ENCODE measurements at regions of chr10 and their contacts with region 1.

Region 1: DNA sequence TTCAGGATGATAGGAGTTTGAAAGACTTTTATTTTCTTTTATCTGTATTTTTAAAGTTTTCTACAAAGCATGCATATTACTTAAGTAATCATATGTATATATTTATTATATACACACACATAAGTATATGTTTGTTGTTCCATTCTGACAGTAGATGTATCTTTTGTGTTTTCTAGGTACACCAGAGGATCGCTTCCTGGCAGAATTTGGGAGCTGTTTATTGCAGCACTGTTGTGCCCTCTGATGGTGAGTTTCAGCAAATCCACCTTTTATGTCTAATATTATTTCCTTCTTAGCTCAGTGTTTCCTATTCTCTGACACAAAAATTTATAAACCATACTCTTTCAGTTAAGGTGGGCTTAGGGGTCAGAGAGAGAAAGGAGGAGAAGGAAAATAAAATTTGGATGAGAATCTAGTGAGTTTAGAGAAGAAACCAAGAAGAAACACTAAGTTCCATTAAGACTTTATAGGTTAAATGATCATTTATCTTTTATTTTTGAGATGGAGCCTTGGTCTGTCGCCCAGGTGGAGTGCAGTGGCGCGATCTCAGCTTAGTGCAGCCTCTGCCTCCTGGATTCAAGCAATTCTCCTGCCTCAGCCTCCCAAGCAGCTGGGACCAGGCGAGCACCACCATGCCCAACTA is 59.2 kb upstream of the OIT3 start:
- DNase-seq: no peak
- H3K4me3 ChIP-seq: no peak overlapping the region
- H3K27ac ChIP-seq: no peak overlapping the region
- H3K4me1 ChIP-seq: peaks cover 13% of the 10 kb centered on the region
- H3K27me3 ChIP-seq: no peaks in the 10 kb centered on the region
- CTCF ChIP-seq: peak; percentile 42 to 78 (median 47)
- POLR2A ChIP-seq: no peak

Region 2: GRCh38 chr10:72364239-72364777 is 470.0 kb before region 1 on chr10:
- intact Hi-C with region 1: loop called (anchors 10 kb)
- DNase-seq: peak in 1 of 2 donors; percentile 93
- H3K4me3 ChIP-seq: peak overlapping the region in 1 of 2 donors; percentile 9
- H3K27ac ChIP-seq: peak overlapping the region; percentile 26
- H3K4me1 ChIP-seq: peaks cover 11% of the 10 kb centered on the region
- H3K27me3 ChIP-seq: no peaks in the 10 kb centered on the region
- CTCF ChIP-seq: peak; percentile 91 to 95 (median 95)
- POLR2A ChIP-seq: no peak

Region 3: DNA sequence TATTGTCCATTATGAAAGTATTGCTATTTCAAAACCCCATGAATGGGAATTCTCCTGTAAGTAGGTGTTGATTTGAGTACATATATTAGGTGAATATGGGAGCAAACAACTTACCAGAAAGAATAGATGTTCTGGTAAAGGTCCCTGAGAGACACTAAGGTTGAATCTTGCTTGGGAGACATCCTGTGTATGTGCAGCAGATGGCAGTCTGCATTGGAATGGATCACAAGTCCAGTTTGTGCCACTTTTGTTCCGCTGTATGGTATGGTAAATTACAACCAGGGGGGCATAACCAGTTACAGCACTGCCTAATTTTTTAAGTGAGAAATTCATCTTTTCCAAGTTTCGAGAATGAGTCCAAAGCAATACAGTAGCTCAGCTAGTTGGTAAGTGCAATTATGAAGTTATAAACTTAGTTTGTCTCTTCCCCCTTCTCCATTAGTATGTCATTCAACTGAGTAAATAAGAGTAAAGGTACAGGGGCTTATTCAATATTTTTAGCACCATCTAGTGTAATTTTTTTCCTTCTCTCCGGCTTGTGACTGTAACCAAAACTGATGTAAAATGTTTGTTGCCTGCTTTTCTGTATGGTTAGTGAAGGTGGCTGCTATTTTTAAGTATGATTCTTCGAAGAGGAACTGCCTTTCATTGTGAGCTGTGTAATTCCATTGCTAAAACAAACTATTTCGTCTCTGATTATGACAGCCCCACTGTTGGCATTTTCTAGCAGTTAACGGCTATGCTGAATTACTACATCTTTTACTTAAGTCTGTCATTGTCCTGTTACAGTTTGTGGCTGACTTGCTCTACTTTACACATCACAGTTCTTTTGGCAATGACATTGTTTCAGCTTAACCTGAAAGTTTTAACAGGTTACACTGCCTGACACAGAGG is 139.6 kb before region 1 on chr10:
- intact Hi-C with region 1: loop called (anchors 5 kb)
- DNase-seq: no peak
- H3K4me3 ChIP-seq: peak overlapping the region in 1 of 2 donors; percentile 13
- H3K27ac ChIP-seq: no peak overlapping the region
- H3K4me1 ChIP-seq: peaks cover 36% of the 10 kb centered on the region
- H3K27me3 ChIP-seq: no peaks in the 10 kb centered on the region
- CTCF ChIP-seq: peak in 1 of 3 experiments; percentile 25
- POLR2A ChIP-seq: no peak

Region 4: GRCh38 chr10:72800000-72800740 is 34.1 kb before region 1 on chr10:
- intact Hi-C with region 1: no loop called
- DNase-seq: no peak
- H3K4me3 ChIP-seq: no peak overlapping the region
- H3K27ac ChIP-seq: no peak overlapping the region
- H3K4me1 ChIP-seq: peaks cover 29% of the 10 kb centered on the region
- H3K27me3 ChIP-seq: no peaks in the 10 kb centered on the region
- CTCF ChIP-seq: no peak
- POLR2A ChIP-seq: no peak